ENCODE measurements at regions of chr2 and their contacts with region 1.

Region 1: GRCh38 chr2:196926562-196927375 is at the start of gene PGAP1:
- DNase-seq: peak; percentile 85
- H3K4me3 ChIP-seq: peak within 1 kb of the TSS; percentile 71
- H3K27ac ChIP-seq: no peak within 1 kb of the TSS
- H3K4me1 ChIP-seq: peaks cover 12% of the 10 kb centered on the region
- CTCF ChIP-seq: no peak
- total RNA-seq, gene PGAP1: 0.51 and 0.54 TPM in 2 replicates

Region 2: GRCh38 chr2:196798980-196799379 is 127.8 kb before region 1 on chr2:
- CTCF ChIA-PET with region 1: no interaction called
- POLR2A ChIA-PET with region 1: interaction called, 6 read pairs
- intact Hi-C with region 1: loop called (anchors 1 kb)
- DNase-seq: no peak
- H3K4me3 ChIP-seq: peak overlapping the region; percentile 90
- H3K27ac ChIP-seq: peak overlapping the region; percentile 37
- H3K4me1 ChIP-seq: peaks cover 13% of the 10 kb centered on the region
- CTCF ChIP-seq: no peak

Region 3: DNA sequence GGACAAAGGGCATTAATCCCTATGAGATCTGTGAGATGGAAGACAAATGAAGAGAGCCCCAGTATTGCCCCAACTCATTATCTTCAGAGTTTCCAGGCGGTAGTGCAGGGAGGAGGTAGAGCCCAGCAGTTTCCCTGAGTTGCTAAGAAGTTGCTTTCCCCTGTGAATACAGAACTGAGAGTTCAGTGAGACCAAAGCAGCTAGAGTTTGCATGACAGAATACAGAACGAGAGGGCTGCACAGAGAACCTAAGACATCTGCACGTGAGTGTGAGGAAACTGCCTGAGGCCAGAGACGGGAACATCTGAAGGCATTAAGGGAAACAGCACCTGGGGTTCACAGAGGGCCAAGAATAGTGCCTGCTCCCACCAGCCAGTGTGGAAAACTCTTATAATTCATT is 17.8 kb after region 1 on chr2:
- CTCF ChIA-PET with region 1: interaction called, 5 read pairs
- POLR2A ChIA-PET with region 1: interaction called, 10 read pairs
- intact Hi-C with region 1: no loop called
- DNase-seq: peak; percentile 36
- H3K4me3 ChIP-seq: no peak overlapping the region
- H3K27ac ChIP-seq: no peak overlapping the region
- H3K4me1 ChIP-seq: no peaks in the 10 kb centered on the region
- CTCF ChIP-seq: no peak

Region 4: DNA sequence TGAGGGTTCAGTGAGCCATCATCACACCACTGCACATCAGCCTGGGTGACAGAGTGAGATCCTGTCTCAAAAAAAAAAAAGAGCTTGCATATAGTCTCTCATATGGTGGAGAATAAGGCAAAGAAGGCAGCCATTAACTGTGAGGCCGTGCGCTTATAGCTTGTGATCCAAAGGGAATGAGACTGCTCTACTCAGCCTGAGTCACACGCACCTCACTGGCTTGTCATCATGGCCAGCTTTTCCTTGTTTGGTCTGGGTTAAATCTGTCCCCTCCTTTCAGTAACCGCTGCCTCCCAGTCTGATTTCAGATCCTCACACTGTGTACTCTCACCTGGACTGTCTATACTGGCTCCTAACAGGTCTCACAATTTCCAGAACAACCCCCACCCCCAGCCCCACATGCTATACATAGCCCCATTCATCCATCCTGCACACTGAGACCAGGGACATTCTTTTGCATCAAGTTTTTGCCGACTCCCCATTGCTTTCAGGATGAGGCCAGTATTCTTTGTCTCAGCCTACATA is 419.1 kb after region 1 on chr2:
- CTCF ChIA-PET with region 1: no interaction called
- POLR2A ChIA-PET with region 1: interaction called, 10 read pairs
- intact Hi-C with region 1: no loop called
- DNase-seq: no peak
- H3K4me3 ChIP-seq: no peak overlapping the region
- H3K27ac ChIP-seq: no peak overlapping the region
- H3K4me1 ChIP-seq: no peaks in the 10 kb centered on the region
- CTCF ChIP-seq: no peak

Measured in OCI-LY7 (cell line).